ENCODE measurements at regions of chr2 and their contacts with region 1.

Region 1: DNA sequence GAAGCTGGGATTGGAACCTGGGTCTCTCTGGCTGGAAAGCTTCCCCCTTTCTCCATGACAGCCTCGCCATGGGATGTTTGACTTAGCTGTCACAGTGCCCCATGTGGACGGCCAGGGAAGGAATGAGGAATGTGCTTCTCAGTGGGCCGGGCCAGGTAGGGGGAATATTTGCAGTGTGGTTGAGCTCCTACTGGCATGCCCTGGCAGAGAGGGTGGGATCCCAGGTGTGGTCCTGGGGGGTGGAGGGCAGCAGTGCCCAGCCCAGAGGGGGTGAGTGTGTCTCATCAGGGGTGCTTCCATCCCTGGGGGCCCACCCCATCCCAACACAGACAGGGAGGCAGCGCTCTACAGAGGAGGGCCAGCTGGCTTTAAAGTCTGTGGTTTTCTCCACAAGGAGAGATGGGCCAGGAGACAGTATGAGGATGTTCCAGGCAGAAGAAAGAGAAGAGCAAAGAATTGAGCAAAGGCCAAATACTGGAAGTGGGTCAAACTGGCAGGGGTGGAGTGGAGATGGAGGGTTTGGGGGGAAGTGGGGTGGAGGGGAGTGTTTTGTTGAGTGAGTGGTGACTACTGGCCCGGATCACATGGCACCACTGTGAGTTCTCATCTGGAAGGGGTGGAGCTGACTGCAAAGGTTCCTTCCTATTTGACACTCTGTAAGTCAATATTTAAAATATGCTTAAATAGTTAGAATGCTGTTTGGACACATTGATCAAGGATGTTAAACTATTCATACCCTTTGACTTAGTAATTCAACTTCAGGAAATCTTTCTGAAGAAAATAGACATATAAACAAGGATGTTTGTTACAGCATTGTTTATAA is 94.0 kb downstream of the MYCN start:
- DNase-seq: no peak

Region 2: GRCh38 chr2:14272396-14273075 is 1761.8 kb before region 1 on chr2:
- intact Hi-C with region 1: loop called in 1 of 2 experiments (anchors 10 kb)
- DNase-seq: no peak

Region 3: GRCh38 chr2:15177103-15177502 is 857.3 kb before region 1 on chr2:
- intact Hi-C with region 1: no loop called
- DNase-seq: no peak

Region 4: GRCh38 chr2:16055848-16056580 is 21.7 kb after region 1 on chr2:
- intact Hi-C with region 1: no loop called
- DNase-seq: no peak

Measured in posterior vena cava (tissue), 2 donors.